ENCODE measurements at regions of chr5 and their contacts with region 1.

Region 1: GRCh38 chr5:55868846-55869245 is 17.7 kb downstream of the IL31RA start:
- DNase-seq: peak; percentile 90
- ATAC-seq: peak; percentile 98
- H3K4me3 ChIP-seq: no peak overlapping the region
- H3K27ac ChIP-seq: peak overlapping the region; percentile 85
- H3K4me1 ChIP-seq: peaks cover 18% of the 10 kb centered on the region
- H3K27me3 ChIP-seq: no peaks in the 10 kb centered on the region
- CTCF ChIP-seq: no peak

Region 2: DNA sequence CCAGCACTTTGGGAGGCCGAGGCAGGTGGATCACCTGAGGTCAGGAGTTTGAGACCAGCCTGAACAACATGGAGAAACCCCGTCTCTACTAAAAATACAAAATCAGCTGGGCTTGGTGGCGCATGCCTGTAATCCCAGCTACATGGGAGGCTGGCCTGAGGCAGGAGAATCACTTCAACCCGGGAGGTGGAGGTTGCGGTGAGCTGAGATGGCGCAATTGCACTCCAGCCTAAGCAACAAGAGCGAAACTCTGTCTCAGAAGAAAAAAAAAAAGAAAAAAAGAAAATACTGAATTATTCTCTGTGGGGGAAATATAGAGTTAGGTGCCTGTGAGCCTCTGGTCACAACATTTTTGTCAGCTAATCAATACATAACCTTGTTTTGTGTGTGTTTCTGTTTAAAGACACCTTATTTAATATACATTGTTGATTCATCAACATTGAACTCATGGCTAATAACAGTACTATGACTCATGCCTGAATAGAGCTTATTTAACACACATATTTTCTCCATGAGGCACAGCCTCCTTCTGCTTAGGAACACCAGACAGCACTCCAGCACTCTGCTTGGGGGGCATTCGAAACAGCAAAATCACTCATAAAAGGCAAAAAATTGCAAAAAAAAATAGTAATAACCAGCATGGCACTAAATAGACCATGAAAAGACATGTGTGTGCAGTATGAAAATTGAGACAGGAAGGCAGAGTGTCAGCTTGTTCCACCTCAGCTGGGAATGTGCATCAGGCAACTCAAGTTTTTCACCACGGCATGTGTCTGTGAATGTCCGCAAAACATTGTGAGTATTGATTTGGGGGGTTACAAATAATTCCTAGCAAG is 17.8 kb before region 1 on chr5 and contains the start of gene IL31RA:
- CTCF ChIA-PET with region 1: no interaction called
- POLR2A ChIA-PET with region 1: no interaction called
- intact Hi-C with region 1: loop called (anchors 2 kb)
- DNase-seq: peak; percentile 74
- ATAC-seq: peak; percentile 93
- H3K4me3 ChIP-seq: peak within 1 kb of the TSS; percentile 69
- H3K27ac ChIP-seq: peak within 1 kb of the TSS; percentile 72
- H3K4me1 ChIP-seq: peaks cover 12% of the 10 kb centered on the region; the same call in 1 of the 2 replicates
- H3K27me3 ChIP-seq: no peaks in the 10 kb centered on the region
- CTCF ChIP-seq: no peak
- total RNA-seq, gene IL31RA: 1.6 and 3.0 TPM in 2 replicates